CD14-positive monocyte (primary cell): ENCODE measurements at regions of chr7 and their contacts with region 1.

Region 1: DNA sequence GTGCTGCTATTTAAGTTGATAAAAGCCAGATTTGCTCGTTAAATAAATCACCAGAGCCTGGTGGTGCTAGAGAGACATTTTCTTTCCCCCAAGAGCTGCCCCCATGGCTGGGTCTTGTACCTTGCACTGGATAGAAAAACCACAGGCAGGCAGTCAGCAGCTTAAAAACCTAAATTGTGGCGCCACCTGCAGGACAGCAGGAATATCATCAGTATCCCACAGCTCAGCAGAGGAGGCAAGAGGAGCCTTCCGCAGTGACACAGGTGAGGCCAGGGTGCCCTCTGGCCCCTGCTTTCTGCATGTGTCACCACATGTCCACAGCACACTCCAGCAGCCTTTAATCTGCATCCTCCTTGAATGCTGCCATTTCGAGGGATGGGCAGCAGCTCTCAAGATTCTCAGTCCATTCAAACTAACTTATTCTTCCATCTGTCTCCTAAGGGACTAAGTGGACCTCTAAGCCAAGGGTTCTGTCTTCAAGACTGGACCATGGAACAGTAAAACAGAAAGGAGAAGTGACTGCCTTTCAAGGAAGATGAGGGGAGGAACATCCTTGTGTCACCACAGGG is 4.5 kb upstream of the PLXNA4 start:
- DNase-seq: peak; percentile 35 to 60 (median 41)
- H3K4me3 ChIP-seq: no peak overlapping the region
- H3K4me3 Mint-ChIP-seq: no peak overlapping the region
- H3K27ac ChIP-seq: no peak overlapping the region
- H3K27ac Mint-ChIP-seq: no peak overlapping the region
- H3K4me1 ChIP-seq: peaks cover 0 to 4% of the 10 kb centered on the region in 2 donors
- H3K4me1 Mint-ChIP-seq: peaks cover 5% of the 10 kb centered on the region
- H3K27me3 ChIP-seq: peaks cover 34 to 39% of the 10 kb centered on the region in 2 donors
- H3K27me3 Mint-ChIP-seq: peaks cover 32 to 42% (median 41%) of the 10 kb centered on the region in 3 donors
- CTCF ChIP-seq: peak; percentile 83

Region 2: DNA sequence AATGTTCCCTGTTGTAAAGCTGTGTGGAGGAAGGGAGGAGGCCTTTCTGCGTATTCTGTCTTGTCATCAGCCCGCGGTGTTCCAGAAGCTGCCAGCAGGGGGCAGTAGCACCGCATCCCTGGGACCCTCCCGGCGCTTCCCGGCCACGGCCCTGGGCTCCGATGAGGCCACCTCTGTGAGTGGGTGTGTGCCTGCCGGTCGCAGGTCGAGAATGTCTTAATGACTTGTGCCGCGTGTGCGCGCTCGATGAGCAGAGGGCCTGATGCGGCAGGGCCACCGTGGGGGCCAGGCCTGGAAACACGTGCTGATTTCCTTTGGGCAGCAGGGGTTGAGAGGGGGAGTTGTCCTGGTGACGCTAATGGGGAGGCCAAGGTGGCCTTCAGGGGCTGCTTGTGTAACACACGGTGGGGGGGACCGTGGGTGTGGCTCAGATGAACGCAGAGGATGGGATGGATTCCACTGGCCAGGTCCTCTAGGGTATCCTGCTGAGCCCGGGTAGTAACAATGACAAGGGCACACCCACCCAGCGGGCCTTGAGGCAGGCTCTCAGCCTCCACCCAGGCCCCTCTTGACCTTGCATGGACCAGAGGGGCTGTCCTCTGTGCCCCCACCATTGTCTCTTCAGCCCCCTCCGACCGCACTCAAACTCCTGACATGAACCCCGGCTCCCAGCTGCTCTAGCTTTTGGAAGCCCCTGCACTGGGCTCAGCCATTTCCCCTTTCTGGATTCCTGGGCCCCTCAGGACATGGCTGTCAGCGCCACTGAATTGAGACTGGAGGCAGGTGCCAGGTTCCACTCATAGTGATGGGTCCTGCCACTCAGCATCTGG is 888.5 kb before region 1 on chr7:
- intact Hi-C with region 1: loop called (anchors 2 to 10 kb)
- DNase-seq: no peak
- H3K4me3 ChIP-seq: no peak overlapping the region
- H3K4me3 Mint-ChIP-seq: peak overlapping the region in 1 of 2 donors; percentile 42
- H3K27ac ChIP-seq: no peak overlapping the region
- H3K27ac Mint-ChIP-seq: peak overlapping the region in 1 of 7 donors; percentile 55
- H3K4me1 ChIP-seq: peaks cover 0 to 3% of the 10 kb centered on the region in 2 donors
- H3K4me1 Mint-ChIP-seq: peaks cover 5% of the 10 kb centered on the region
- H3K27me3 ChIP-seq: no peaks in the 10 kb centered on the region
- H3K27me3 Mint-ChIP-seq: peaks cover 9 to 21% (median 20%) of the 10 kb centered on the region in 3 donors
- CTCF ChIP-seq: peak; percentile 68

Region 3: DNA sequence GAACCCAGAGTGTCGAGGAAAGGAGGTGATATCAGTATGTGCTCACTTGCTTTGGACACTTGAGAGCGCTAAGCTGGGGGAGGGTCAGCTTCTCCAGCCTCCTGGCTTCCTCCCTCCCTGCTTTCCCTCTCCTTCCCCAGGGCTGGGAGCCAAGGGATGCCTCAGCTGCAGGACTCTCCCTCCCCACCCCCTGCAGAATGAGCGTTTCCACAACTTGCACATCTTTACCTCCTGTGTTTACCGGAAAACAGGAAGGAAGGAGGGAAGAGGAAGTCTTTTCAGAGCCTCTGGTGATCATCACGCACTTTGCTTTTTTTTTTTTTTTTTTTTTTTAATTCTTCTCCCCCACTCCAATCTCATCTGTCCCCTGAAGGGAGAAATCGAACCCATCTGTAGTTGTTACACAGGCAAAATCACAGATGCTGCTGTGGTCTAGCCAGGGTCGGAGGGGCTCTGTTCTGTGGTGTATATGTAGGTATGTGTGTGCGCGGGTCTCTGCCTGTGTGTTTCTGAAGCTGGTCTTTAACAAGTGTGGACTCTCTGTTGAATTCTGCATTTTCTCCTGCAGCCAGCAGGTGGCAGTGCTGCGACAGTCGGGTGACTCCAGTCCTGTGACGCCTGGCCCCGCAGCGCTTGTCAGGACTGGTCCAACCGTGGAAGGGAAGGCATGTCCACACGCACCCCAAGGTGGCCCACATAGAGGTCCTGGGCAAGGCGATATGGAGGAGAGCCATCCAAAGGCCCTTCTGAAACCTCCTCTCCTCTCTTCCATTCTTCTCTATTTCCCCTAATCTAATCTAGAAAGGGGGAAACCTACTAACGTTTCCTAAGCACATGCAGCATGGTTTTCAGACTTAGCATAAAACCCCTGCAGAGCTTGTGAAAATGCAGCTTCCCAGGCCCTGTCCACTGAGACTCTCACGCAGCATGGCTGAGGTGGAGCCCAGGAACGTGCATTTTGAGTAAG is 262.2 kb before region 1 on chr7:
- intact Hi-C with region 1: loop called (anchors 1 to 2 kb)
- DNase-seq: peak; percentile 55 to 69 (median 58)
- H3K4me3 ChIP-seq: no peak overlapping the region
- H3K4me3 Mint-ChIP-seq: peak overlapping the region in 1 of 2 donors; percentile 32
- H3K27ac ChIP-seq: no peak overlapping the region
- H3K27ac Mint-ChIP-seq: peak overlapping the region in 1 of 7 donors; percentile 67
- H3K4me1 ChIP-seq: peaks cover 4 to 6% of the 10 kb centered on the region in 2 donors
- H3K4me1 Mint-ChIP-seq: peaks cover 9% of the 10 kb centered on the region
- H3K27me3 ChIP-seq: peaks cover 14 to 15% of the 10 kb centered on the region in 2 donors
- H3K27me3 Mint-ChIP-seq: peaks cover 23 to 36% (median 27%) of the 10 kb centered on the region in 3 donors
- CTCF ChIP-seq: peak; percentile 89

Region 4: DNA sequence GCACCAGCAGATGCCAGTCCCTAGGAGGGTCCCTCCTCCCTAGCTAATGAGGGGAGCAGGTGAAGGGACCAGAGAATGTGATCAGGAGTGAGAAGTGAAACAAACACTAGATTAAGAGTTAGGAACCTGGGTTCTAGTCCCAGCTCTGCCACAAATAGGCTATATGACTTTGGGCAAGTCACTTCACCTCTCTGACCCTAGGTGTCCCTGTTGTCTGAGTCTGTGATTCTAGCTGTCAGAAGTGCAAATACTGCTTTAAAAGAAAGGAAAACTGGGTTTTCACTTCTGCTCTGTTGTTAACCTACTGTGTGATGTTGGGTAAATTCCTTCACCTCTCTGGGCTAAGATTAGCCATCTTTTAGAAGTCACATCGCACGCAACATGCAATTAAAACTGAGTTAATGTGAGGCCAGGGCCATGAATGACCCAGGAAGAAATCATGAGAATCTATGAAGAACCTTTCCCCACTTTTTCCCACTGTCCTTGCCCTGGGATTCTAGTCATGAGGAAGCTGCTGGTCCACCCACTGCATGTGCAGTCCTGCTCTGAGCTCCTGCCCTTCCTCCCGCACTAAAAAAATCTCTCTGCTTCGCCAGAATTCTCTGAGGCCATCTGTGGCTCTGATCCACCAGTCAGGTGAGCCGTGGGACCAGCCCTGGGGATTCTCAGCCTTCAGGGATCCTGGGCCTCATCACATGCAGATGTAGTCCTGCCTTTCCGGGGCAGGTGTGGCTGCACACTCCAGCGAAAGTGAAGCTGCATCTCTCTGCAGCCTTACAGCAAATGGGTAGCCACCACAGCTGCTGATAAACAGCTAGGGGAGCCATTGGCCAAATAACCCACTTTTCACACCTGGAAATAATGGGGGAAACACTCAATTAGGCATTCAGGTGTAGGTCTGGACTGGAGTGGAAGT is 186.3 kb before region 1 on chr7:
- intact Hi-C with region 1: loop called (anchors 2 to 5 kb)
- DNase-seq: peak in 2 of 3 donors; percentile 10 to 26
- H3K4me3 ChIP-seq: no peak overlapping the region
- H3K4me3 Mint-ChIP-seq: no peak overlapping the region
- H3K27ac ChIP-seq: no peak overlapping the region
- H3K27ac Mint-ChIP-seq: no peak overlapping the region
- H3K4me1 ChIP-seq: peaks cover 16 to 18% of the 10 kb centered on the region in 2 donors
- H3K4me1 Mint-ChIP-seq: peaks cover 16% of the 10 kb centered on the region
- H3K27me3 ChIP-seq: no peaks in the 10 kb centered on the region
- H3K27me3 Mint-ChIP-seq: peaks cover 3 to 12% (median 9%) of the 10 kb centered on the region in 3 donors
- CTCF ChIP-seq: peak; percentile 49

Region 5: DNA sequence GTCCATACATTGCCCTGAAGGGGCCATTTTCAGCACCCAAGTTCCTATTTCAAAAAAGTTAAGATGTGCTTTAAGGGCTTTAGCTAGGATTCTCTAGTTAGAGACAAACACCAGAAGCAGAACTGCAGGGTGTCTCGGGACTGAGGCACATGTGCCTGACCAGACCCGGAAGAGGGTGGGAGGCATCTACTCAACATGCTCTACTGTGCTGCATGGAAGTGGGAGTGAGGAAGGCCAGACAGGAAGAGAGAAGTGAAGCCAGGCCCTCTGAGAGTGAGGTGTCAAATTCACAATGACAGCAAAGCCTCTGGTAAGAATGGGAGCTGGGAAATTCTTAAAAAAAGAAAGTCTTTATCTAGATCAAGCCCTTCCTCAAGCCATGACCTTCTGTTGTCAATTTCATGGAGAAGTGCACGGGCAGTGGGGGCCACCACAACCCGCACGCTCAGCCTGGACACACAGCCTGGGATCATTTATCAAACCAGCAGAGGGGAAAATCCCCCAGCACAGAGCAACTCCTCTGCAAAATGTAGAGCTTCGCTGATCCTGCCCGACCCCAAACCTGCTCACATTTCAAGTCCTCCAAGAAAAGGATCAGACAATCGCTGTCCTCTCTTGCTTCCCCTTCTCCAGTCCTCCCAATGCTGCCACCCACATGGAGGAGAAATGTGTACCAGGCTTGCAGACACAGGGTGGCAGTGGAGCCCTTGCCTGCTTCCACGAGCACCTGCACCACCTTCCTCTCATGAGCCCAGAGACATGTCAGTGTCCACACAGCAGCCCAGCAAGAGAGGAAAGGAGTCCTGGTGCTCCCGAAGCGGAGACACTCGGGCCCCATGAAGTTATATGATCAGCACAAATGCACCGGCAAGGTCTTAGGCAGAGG is 43.1 kb before region 1 on chr7:
- intact Hi-C with region 1: no loop called
- DNase-seq: peak in 2 of 3 donors; percentile 8 to 32
- H3K4me3 ChIP-seq: no peak overlapping the region
- H3K4me3 Mint-ChIP-seq: peak overlapping the region in 1 of 2 donors; percentile 62
- H3K27ac ChIP-seq: no peak overlapping the region
- H3K27ac Mint-ChIP-seq: peak overlapping the region in 2 of 7 donors; percentile 58 to 79
- H3K4me1 ChIP-seq: peaks cover 24% of the 10 kb centered on the region in 2 donors
- H3K4me1 Mint-ChIP-seq: peaks cover 28% of the 10 kb centered on the region
- H3K27me3 ChIP-seq: peaks cover 0 to 3% of the 10 kb centered on the region in 2 donors
- H3K27me3 Mint-ChIP-seq: peaks cover 2 to 12% (median 6%) of the 10 kb centered on the region in 3 donors
- CTCF ChIP-seq: no peak